Sciatic nerve (tissue), 2 donors: ENCODE measurements at regions of chr9 and their contacts with region 1.

Region 1: DNA sequence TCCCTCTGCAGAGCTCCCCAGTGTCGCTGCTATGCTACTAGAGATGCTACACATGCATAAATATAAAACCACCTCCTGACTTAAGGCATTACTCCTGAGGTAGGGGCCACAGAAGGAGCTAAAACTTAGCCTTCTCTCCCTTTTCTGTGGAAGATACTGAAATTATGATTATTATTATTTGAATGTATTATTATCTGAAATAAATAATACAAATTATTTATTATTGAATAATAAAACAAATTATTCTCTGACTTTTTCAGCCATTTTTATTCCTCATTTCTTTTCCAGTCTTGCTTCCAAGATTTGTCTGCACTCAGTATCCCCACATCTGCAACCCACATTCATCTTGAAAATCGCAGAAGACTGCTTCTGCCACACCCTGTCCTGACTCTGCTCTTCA is 414.9 kb upstream of the ACO1 start:
- DNase-seq: no peak
- ATAC-seq: no peak

Region 2: DNA sequence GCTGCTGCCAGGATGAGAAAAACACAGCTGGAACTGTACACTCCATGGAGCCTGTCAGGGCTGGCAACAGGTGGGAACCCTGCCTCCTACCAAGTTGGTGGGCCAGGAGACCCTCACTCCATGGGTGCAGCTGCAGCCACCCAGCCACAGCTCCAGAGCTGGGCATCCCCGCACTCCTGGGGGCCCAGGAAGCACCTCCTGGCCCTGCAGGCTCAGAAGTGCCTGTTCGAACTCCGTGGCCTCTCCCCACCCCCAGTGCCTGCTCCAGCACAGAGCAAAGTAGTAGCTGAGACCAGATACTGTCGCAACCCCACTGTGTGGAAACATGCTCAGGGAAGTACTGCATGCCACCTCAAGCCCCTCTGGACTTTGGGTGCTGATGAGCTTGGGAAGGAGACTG is 149.1 kb before region 1 on chr9:
- intact Hi-C with region 1: loop called (anchors 5 kb)
- DNase-seq: no peak
- ATAC-seq: no peak